ENCODE measurements at regions of chr3 and their contacts with region 1.

Region 1: DNA sequence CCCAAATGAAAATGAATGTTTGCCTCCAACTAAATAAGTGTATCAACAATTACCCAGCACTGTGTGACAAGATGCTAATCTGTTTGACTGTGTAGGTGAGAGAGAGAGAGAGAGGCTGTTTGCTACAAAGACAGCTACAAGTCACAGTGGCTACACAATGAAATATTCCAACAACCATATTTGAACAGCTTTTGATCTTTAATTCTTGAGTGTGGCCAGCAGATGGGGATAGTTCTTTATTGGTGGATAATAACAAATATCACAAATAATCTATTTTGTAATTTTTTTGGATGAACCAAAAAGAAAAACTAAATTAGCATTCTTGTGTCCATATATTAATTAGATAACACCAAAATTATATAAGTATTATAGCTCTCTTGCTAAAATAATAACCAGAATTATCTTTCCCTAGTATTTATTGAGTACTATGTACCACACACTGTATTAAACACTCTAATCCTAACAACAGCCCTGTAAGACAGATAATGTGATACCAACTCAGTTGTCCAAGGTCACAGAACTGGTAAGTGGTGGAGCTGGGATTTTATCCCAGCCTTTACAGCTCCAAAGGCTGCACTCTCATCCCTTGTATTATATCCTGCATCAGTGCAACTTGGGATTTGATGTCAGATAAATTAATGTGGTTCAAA is 61.9 kb upstream of the C3orf80 start:
- DNase-seq: peak; percentile 63
- H3K4me3 ChIP-seq: no peak overlapping the region
- H3K27ac ChIP-seq: no peak overlapping the region
- H3K4me1 ChIP-seq: no peaks in the 10 kb centered on the region
- H3K27me3 ChIP-seq: no peaks in the 10 kb centered on the region

Region 2: DNA sequence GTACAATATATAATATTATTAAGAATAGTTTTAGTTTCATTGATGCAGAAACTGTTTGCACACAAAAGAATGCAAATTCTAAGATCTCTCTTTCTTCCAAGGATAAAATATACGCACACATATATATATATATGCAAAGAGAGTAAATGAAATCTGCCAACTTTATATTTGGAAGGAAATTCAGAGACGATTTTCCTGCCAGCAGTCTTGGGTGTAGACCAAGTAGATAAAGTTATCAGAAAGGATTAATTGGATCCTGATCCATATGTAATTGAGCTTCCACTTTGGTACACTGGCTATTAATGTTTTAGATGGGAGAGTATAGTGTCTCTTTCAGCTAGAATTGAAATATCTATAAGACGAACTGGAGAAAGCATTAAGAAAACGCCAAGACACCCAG is 470.1 kb before region 1 on chr3:
- in situ Hi-C with region 1: no loop called
- DNase-seq: no peak
- H3K4me3 ChIP-seq: no peak overlapping the region
- H3K27ac ChIP-seq: no peak overlapping the region
- H3K4me1 ChIP-seq: no peaks in the 10 kb centered on the region
- H3K27me3 ChIP-seq: 0 out of 2 replicates have a peak, but pooled peaks cover 5% of the 10 kb centered on the region

Region 3: GRCh38 chr3:159919873-159920272 is 243.5 kb before region 1 on chr3:
- in situ Hi-C with region 1: no loop called
- DNase-seq: peak; percentile 79
- H3K4me3 ChIP-seq: no peak overlapping the region
- H3K27ac ChIP-seq: peak overlapping the region; percentile 48
- H3K4me1 ChIP-seq: peaks cover 15% of the 10 kb centered on the region
- H3K27me3 ChIP-seq: no peaks in the 10 kb centered on the region

Region 4: DNA sequence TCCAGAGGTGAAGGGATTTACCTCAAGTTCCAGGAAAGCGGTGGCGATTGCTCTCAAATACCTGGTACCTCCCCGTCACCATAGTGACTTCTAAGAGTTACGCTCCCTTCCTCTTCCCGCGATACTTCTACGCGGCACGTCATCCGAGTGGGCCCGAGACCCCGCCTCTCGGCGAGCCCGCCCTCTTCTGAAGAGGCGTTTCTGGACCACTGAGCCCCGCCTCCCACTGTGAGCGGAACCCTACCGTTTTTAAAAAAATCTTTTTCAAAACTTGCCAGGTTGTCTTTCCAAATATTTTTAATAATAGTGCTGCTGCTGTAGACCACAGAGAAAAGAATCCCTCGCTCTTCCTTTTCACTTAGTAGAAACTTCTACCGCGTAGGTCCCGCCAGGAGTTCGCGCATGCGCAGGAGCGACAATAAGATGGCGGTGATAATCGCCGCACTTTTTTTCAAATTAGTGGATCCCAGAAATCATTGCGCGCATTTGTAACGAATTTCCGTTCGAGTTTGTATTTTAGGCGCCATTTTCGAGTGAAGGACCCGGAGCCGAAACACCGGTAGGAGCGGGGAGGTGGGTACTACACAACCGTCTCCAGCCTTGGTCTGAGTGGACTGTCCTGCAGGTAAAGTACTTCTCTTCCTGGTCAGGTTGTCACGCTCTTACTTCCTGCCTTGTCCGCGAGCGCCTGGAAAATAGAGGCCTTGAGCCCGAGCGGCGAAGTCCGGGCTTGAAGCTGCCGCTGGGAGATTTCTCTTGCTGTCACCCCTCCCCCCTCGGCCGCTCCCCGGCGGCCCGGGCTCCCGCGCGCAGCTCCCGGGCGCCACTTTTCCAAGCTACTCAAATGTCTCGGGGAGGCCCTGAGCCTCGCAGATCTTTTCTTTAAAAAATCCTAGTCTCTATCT is 236.0 kb after region 1 on chr3 and contains the starts of genes IFT80 and SMC4:
- in situ Hi-C with region 1: loop called (anchors 10 kb)
- DNase-seq: peak; percentile 98
- H3K4me3 ChIP-seq: peak within 1 kb of the TSS; percentile 95
- H3K27ac ChIP-seq: peak within 1 kb of the TSS; percentile 98
- H3K4me1 ChIP-seq: peaks cover 45% of the 10 kb centered on the region
- H3K27me3 ChIP-seq: no peaks in the 10 kb centered on the region
- total RNA-seq, gene IFT80: 48.4 and 59.4 TPM in 2 replicates
- total RNA-seq, gene SMC4: 40.2 and 73.6 TPM in 2 replicates